ENCODE measurements at regions of chr17 and their contacts with region 1.

Region 1: DNA sequence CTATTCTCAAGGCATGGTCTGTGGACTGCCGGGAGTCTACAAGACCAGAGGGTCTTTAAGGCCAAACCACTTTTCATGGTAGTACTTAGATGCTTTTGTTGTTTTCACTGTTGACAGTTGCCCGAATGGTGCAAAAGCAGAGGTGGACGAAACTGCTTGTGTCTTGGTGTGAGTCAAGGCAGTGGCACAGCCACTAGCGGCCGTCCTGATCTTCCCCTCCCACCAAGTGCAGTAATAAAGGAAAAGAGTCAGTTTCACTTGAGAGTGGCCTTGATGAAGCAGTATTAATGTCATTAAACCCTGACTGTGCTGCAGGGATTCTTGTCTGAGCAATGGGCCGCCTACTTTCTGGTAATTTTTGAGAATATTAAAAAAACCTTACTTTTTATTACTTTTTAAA is 109.1 kb downstream of the PRKCA start:
- DNase-seq: no peak
- ATAC-seq: no peak
- H3K4me3 ChIP-seq: no peak overlapping the region
- H3K4me3 Mint-ChIP-seq: no peak overlapping the region
- H3K27ac ChIP-seq: no peak overlapping the region
- H3K27ac Mint-ChIP-seq: no peak overlapping the region
- H3K4me1 ChIP-seq: peaks cover 37 to 51% of the 10 kb centered on the region in 2 experiments
- H3K4me1 Mint-ChIP-seq: peaks cover 70 to 77% (median 76%) of the 10 kb centered on the region in 3 donors
- H3K27me3 ChIP-seq: no peaks in the 10 kb centered on the region
- H3K27me3 Mint-ChIP-seq: no peaks in the 10 kb centered on the region

Region 2: GRCh38 chr17:66337866-66338485 is 73.5 kb before region 1 on chr17:
- CTCF ChIA-PET with region 1: no interaction called
- POLR2A ChIA-PET with region 1: interaction called in 1 of 2 experiments, 13 read pairs
- DNase-seq: no peak
- ATAC-seq: no peak
- H3K4me3 ChIP-seq: no peak overlapping the region
- H3K4me3 Mint-ChIP-seq: peak overlapping the region in 1 of 3 donors; percentile 71
- H3K27ac ChIP-seq: no peak overlapping the region
- H3K27ac Mint-ChIP-seq: peak overlapping the region; percentile 28 to 58
- H3K4me1 ChIP-seq: peaks cover 18 to 19% of the 10 kb centered on the region in 2 experiments
- H3K4me1 Mint-ChIP-seq: peaks cover 77 to 79% (median 77%) of the 10 kb centered on the region in 3 donors
- H3K27me3 ChIP-seq: no peaks in the 10 kb centered on the region
- H3K27me3 Mint-ChIP-seq: no peaks in the 10 kb centered on the region

Region 3: DNA sequence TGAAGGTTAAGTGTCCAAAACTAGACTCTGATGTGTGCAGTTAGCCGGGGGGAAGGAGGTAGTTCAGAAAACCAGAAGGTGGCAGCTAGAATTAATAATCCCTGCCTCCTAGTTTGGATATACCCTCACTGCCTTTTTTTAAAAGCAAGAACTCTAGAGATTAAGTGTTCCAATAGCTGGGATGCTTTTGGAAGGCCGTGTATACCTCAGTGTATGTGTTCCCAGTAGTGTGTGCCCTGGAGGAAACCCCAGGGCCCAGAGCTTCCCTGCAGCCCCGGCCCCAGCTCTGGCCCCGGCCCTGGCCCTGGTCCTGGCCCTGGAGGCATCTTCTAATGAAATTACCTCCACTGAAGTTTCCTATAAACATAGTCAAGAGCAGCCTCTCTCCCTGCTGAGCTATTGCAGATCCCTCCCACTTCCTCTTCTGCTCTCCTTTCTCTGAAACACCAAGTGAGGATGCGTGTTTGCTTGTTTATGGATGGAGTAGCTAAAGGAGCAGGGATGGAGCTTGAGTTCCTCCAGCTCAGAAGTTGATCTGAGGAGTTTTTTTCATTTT is 21.6 kb after region 1 on chr17:
- CTCF ChIA-PET with region 1: no interaction called
- POLR2A ChIA-PET with region 1: no interaction called
- DNase-seq: no peak
- ATAC-seq: no peak
- H3K4me3 ChIP-seq: no peak overlapping the region
- H3K4me3 Mint-ChIP-seq: peak overlapping the region in 1 of 3 donors; percentile 14
- H3K27ac ChIP-seq: no peak overlapping the region
- H3K27ac Mint-ChIP-seq: no peak overlapping the region
- H3K4me1 ChIP-seq: peaks cover 12 to 31% of the 10 kb centered on the region in 2 experiments
- H3K4me1 Mint-ChIP-seq: peaks cover 20 to 25% (median 22%) of the 10 kb centered on the region in 3 donors
- H3K27me3 ChIP-seq: no peaks in the 10 kb centered on the region
- H3K27me3 Mint-ChIP-seq: no peaks in the 10 kb centered on the region

Measured in T-cell (primary cell).